Activated CD4-positive, alpha-beta T cell treated with anti-CD3 and anti-CD28 coated beads for 36 hours (primary cell): ENCODE measurements at regions of chr13 and their contacts with region 1.

Region 1: DNA sequence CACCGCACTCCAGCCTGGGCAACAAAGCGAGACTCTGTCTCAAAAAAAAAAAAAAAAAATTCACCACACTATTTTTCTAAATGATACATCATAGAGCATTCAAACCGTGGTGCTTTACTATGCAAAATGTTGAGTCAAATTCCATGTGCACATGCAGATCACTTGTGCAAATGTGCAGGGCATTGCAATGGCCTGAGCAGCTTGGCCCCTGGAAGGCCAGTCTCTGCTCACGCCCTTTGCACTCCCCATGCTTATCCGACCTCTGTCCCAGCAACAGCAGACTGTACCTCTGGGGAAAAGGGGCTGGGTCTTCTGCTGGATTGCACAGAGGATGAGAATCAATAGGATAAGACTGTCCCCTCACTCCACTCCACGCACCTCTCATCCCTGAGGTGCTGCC is 58.5 kb downstream of the PARP4 start:
- DNase-seq: no peak
- ATAC-seq: no peak
- H3K4me3 Mint-ChIP-seq: no peak overlapping the region
- H3K27ac Mint-ChIP-seq: no peak overlapping the region
- H3K4me1 Mint-ChIP-seq: peaks cover 6% of the 10 kb centered on the region
- H3K27me3 Mint-ChIP-seq: no peaks in the 10 kb centered on the region

Region 2: GRCh38 chr13:24443366-24443765 is 10.7 kb before region 1 on chr13:
- CTCF ChIA-PET with region 1: interaction called, 4 read pairs
- POLR2A ChIA-PET with region 1: no interaction called
- intact Hi-C with region 1: loop called in 1 of 2 experiments (anchors 1 kb)
- DNase-seq: no peak
- ATAC-seq: no peak
- H3K4me3 Mint-ChIP-seq: no peak overlapping the region
- H3K27ac Mint-ChIP-seq: no peak overlapping the region
- H3K4me1 Mint-ChIP-seq: no peaks in the 10 kb centered on the region
- H3K27me3 Mint-ChIP-seq: no peaks in the 10 kb centered on the region

Region 3: DNA sequence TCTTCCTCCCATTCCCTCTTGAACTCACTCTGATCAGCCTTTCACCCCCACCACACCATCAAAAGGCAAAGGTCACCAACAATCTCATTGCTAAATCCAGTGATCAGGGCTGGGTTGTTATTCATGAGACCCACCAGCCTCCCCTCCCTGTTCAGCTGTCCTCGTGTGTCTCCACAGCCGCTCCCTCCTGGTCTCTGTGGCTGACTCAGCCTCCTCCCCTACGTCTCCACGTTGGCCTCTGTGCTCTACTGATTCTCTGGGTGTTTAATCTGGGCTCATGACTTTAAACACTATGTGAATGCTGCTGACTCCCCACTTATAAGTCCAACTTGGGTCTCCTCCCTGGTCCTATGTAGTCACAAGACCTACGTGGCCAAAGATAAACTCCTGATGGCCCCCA is 19.6 kb after region 1 on chr13:
- CTCF ChIA-PET with region 1: no interaction called
- POLR2A ChIA-PET with region 1: no interaction called
- intact Hi-C with region 1: no loop called
- DNase-seq: no peak
- ATAC-seq: no peak
- H3K4me3 Mint-ChIP-seq: no peak overlapping the region
- H3K27ac Mint-ChIP-seq: no peak overlapping the region
- H3K4me1 Mint-ChIP-seq: no peaks in the 10 kb centered on the region
- H3K27me3 Mint-ChIP-seq: no peaks in the 10 kb centered on the region

Region 4: GRCh38 chr13:25493931-25494640 is 1040.0 kb after region 1 on chr13:
- CTCF ChIA-PET with region 1: no interaction called
- POLR2A ChIA-PET with region 1: no interaction called
- intact Hi-C with region 1: no loop called
- DNase-seq: no peak
- ATAC-seq: no peak
- H3K4me3 Mint-ChIP-seq: no peak overlapping the region
- H3K27ac Mint-ChIP-seq: no peak overlapping the region
- H3K4me1 Mint-ChIP-seq: no peaks in the 10 kb centered on the region
- H3K27me3 Mint-ChIP-seq: peaks cover 19% of the 10 kb centered on the region